Gastrocnemius medialis (tissue), 4 donors: ENCODE measurements at regions of chr3 and their contacts with region 1.

Region 1: DNA sequence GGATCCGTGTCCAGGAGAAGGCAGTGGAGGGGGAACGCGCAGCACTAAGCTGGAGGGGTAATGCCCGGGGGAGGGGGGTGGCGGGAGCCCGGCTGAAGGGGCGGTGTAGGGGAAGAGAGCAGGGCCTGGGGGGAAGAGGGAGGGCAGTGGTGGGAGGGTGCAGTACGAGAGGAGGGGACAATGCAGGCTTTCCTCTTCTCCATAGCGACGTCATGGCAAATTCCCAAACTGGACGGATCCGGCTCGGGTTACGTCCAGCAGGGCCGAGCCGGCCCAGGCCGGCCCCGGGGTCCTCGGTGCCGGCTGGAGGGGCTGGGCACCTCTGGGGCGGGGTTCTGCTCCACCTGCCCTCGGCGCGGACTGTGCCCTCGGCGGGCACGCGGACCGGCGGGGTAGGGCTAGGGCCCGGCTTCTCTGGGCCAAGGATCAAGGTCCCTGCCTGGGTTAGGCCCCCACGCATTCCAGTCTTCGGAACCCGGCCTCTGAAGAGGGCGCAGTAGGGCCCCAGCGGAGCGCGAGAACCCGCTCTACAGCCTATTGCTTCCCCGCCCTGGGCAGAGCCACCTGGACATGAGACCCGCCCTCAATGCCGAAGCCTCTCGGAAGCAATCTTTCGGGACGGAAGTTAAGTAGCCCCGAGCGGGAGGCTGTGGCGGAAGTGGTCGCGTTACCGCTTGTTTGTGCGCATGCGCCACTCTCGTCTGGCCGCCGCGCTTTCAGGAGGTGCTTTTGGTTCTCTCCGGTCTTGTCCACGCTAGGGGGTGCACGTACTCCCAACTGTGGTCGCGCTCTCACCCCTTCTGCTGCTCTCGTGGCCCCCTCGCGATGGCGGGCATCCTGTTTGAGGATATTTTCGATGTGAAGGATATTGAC is 1.4 kb downstream of the POLR2H start:
- DNase-seq: peak; percentile 94 to 96
- ATAC-seq: peak; percentile 86 to 87
- H3K4me3 ChIP-seq: peak overlapping the region; percentile 58 to 94 (median 76)
- H3K27ac ChIP-seq: peak overlapping the region; percentile 91 to 100 (median 95)
- H3K4me1 ChIP-seq: peaks cover 17 to 23% of the 10 kb centered on the region in 2 donors
- H3K27me3 ChIP-seq: no peaks in the 10 kb centered on the region
- CTCF ChIP-seq: peak in 4 of 5 experiments; percentile 21 to 72 (median 55)
- POLR2A ChIP-seq: peak; percentile 82 to 88

Region 2: GRCh38 chr3:184185461-184186308 is 177.2 kb before region 1 on chr3 and contains the start of gene ABCF3:
- in situ Hi-C with region 1: no loop called
- intact Hi-C with region 1: loop called (anchors 5 kb)
- DNase-seq: peak; percentile 99
- ATAC-seq: peak; percentile 92 to 97
- H3K4me3 ChIP-seq: peak within 1 kb of the TSS; percentile 78 to 97 (median 90)
- H3K27ac ChIP-seq: peak within 1 kb of the TSS; percentile 89 to 97 (median 96)
- H3K4me1 ChIP-seq: peaks cover 18 to 21% of the 10 kb centered on the region in 2 donors
- H3K27me3 ChIP-seq: no peaks in the 10 kb centered on the region
- CTCF ChIP-seq: no peak
- POLR2A ChIP-seq: peak; percentile 73 to 91
- total RNA-seq, gene ABCF3: 52.6 to 96.4 (median 63.2) TPM

Region 3: DNA sequence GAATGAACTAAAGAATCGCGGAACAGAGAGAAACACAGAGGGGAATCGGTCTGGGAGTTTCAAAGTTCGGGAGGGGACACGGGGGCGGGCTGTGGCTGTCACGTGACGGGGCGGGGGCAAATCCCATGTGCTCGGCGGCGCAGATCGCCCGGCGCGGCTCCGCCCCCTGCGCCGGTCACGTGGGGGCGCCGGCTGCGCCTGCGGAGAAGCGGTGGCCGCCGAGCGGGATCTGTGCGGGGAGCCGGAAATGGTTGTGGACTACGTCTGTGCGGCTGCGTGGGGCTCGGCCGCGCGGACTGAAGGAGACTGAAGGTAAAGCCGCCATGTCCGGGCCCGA is 48.6 kb before region 1 on chr3 and contains the start of gene EIF4G1:
- in situ Hi-C with region 1: no loop called
- intact Hi-C with region 1: loop called (anchors 1 kb)
- DNase-seq: peak; percentile 94
- ATAC-seq: peak; percentile 76 to 84
- H3K4me3 ChIP-seq: peak within 1 kb of the TSS; percentile 73 to 94 (median 90)
- H3K27ac ChIP-seq: peak within 1 kb of the TSS; percentile 92 to 100 (median 98)
- H3K4me1 ChIP-seq: peaks cover 38 to 45% of the 10 kb centered on the region in 2 donors
- H3K27me3 ChIP-seq: no peaks in the 10 kb centered on the region
- CTCF ChIP-seq: no peak
- POLR2A ChIP-seq: peak; percentile 66 to 74
- total RNA-seq, gene EIF4G1: 474 to 863 (median 735) TPM

Region 4: GRCh38 chr3:184335661-184336546 is 27.0 kb before region 1 on chr3:
- in situ Hi-C with region 1: no loop called
- intact Hi-C with region 1: loop called (anchors 1 kb)
- DNase-seq: peak; percentile 69 to 79
- ATAC-seq: peak; percentile 53 to 60
- H3K4me3 ChIP-seq: peak overlapping the region; percentile 75 to 90 (median 82)
- H3K27ac ChIP-seq: peak overlapping the region; percentile 98 to 99 (median 98)
- H3K4me1 ChIP-seq: peaks cover 38 to 47% of the 10 kb centered on the region in 2 donors
- H3K27me3 ChIP-seq: no peaks in the 10 kb centered on the region
- CTCF ChIP-seq: no peak
- POLR2A ChIP-seq: peak; percentile 92 to 93

Region 5: GRCh38 chr3:184636741-184637316 is 273.9 kb after region 1 on chr3:
- in situ Hi-C with region 1: no loop called
- intact Hi-C with region 1: no loop called
- DNase-seq: no peak
- ATAC-seq: no peak
- H3K4me3 ChIP-seq: no peak overlapping the region
- H3K27ac ChIP-seq: no peak overlapping the region
- H3K4me1 ChIP-seq: no peaks in the 10 kb centered on the region
- H3K27me3 ChIP-seq: no peaks in the 10 kb centered on the region
- CTCF ChIP-seq: no peak
- POLR2A ChIP-seq: no peak

Region 6: GRCh38 chr3:184757022-184757651 is 394.2 kb after region 1 on chr3:
- in situ Hi-C with region 1: loop called in 1 of 4 experiments (anchors 25 kb)
- intact Hi-C with region 1: no loop called
- DNase-seq: peak; percentile 50 to 66
- ATAC-seq: peak; percentile 90 to 92
- H3K4me3 ChIP-seq: peak overlapping the region; percentile 2 to 29 (median 11)
- H3K27ac ChIP-seq: peak overlapping the region; percentile 59 to 67 (median 62)
- H3K4me1 ChIP-seq: peaks cover 11 to 15% of the 10 kb centered on the region in 2 donors
- H3K27me3 ChIP-seq: no peaks in the 10 kb centered on the region
- CTCF ChIP-seq: no peak
- POLR2A ChIP-seq: peak in 1 of 2 donors; percentile 18

Region 7: GRCh38 chr3:184777336-184778004 is 414.6 kb after region 1 on chr3:
- in situ Hi-C with region 1: loop called in 2 of 4 experiments (anchors 25 kb)
- intact Hi-C with region 1: loop called (anchors 10 kb)
- DNase-seq: peak; percentile 74 to 88
- ATAC-seq: peak; percentile 94 to 97
- H3K4me3 ChIP-seq: no peak overlapping the region
- H3K27ac ChIP-seq: no peak overlapping the region
- H3K4me1 ChIP-seq: no peaks in the 10 kb centered on the region
- H3K27me3 ChIP-seq: peaks cover 0 to 3% (median 0%) of the 10 kb centered on the region in 3 donors
- CTCF ChIP-seq: peak; percentile 83 to 92 (median 87)
- POLR2A ChIP-seq: no peak

Region 8: GRCh38 chr3:184811999-184812661 is 449.2 kb after region 1 on chr3 and contains the start of gene VPS8:
- in situ Hi-C with region 1: loop called in 1 of 4 experiments (anchors 25 kb)
- intact Hi-C with region 1: no loop called
- DNase-seq: peak; percentile 92 to 96
- ATAC-seq: peak; percentile 81 to 83
- H3K4me3 ChIP-seq: peak within 1 kb of the TSS; percentile 70 to 87 (median 82)
- H3K27ac ChIP-seq: peak within 1 kb of the TSS; percentile 89 to 94 (median 90)
- H3K4me1 ChIP-seq: peaks cover 45 to 51% of the 10 kb centered on the region in 2 donors
- H3K27me3 ChIP-seq: no peaks in the 10 kb centered on the region
- CTCF ChIP-seq: peak in 4 of 5 experiments; percentile 77 to 89 (median 81)
- POLR2A ChIP-seq: peak; percentile 98
- total RNA-seq, gene VPS8: 37.2 to 64.1 (median 51.2) TPM